Activated CD4-positive, alpha-beta memory T cell treated with anti-CD3 and anti-CD28 coated beads for 36 hours (primary cell): ENCODE measurements at regions of chr5 and their contacts with region 1.

Region 1: DNA sequence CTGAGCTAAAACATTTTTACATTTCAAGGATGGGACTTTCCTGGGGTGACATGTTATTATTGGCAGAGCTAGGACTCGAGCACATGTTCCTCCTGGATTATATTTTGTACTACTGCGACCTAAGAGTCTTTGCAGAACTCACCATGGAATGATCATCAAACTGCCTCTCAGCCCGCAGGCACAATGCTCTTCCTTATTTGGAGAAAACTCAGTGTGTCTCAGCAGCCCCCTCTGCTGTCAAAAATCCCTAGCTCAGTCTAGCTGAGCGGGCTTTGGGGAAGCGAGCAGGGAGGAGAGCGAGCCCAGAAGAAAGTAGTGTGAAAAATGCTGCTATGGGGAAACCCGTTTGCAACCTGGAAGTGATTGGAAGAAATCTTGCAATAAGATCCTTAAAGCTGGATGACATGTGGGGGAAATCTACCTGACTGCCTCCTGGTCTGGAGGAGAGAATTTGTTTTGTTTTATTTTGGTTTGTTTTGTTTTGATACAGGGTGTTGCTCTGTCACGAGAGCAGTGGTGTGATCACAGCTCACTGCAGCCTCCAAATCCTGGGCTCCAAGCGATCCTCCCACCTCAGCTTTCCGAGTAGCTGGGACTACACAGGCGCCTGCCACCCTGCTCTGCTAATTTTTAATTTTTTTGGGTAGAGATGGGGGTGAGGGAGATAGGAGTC is 89.9 kb upstream of the CLINT1 start:
- DNase-seq: peak; percentile 85
- H3K4me3 Mint-ChIP-seq: no peak overlapping the region
- H3K27ac Mint-ChIP-seq: no peak overlapping the region
- H3K4me1 Mint-ChIP-seq: peaks cover 4% of the 10 kb centered on the region
- H3K27me3 Mint-ChIP-seq: peaks cover 6% of the 10 kb centered on the region

Region 2: DNA sequence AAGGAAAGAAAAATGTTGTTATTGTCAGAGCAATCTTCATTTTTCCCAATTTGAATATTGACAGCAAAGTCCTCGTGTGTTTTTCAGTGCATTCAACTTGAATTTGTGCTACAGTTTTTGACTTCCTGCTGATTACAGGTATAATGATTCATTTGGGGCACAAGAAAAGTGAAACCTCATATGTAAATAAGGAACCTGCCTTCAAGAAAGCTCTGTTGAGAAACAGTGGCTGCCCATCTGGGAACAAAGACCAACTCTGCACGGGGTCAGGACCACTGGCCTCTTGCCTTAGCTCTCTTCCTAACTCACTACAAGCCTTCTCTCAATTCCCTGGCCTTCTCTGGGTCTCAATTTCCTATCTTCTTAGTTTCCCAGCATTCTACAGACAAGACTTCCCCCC is 1006.8 kb before region 1 on chr5:
- CTCF ChIA-PET with region 1: no interaction called
- POLR2A ChIA-PET with region 1: no interaction called
- intact Hi-C with region 1: no loop called
- DNase-seq: no peak
- H3K4me3 Mint-ChIP-seq: no peak overlapping the region
- H3K27ac Mint-ChIP-seq: peak overlapping the region; percentile 52
- H3K4me1 Mint-ChIP-seq: peaks cover 16% of the 10 kb centered on the region
- H3K27me3 Mint-ChIP-seq: no peaks in the 10 kb centered on the region

Region 3: GRCh38 chr5:157761690-157762621 is 186.9 kb before region 1 on chr5:
- CTCF ChIA-PET with region 1: interaction called, 69 read pairs
- POLR2A ChIA-PET with region 1: no interaction called
- intact Hi-C with region 1: loop called (anchors 1 kb)
- DNase-seq: no peak
- H3K4me3 Mint-ChIP-seq: no peak overlapping the region
- H3K27ac Mint-ChIP-seq: no peak overlapping the region
- H3K4me1 Mint-ChIP-seq: peaks cover 15% of the 10 kb centered on the region
- H3K27me3 Mint-ChIP-seq: no peaks in the 10 kb centered on the region

Region 4: DNA sequence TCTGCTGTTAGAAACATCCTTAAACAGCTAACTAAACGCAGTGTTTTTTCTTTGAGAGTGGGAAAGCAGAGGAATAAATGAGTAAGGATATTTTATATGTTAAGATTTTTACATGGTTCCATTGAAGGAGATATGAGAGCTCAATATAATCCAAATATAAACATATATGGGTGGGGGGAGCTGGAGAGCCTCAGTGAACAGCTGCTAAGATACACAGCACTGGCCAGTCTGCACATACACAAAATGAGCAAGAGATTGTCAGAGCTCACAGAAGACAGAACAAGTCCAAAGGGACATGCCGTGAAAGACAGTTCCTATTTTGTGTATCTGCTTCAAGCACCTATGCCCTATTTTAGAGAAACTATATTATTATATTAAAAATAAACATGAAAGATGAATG is 136.8 kb before region 1 on chr5:
- CTCF ChIA-PET with region 1: interaction called, 95 read pairs
- POLR2A ChIA-PET with region 1: no interaction called
- intact Hi-C with region 1: loop called (anchors 1 kb)
- DNase-seq: no peak
- H3K4me3 Mint-ChIP-seq: no peak overlapping the region
- H3K27ac Mint-ChIP-seq: no peak overlapping the region
- H3K4me1 Mint-ChIP-seq: no peaks in the 10 kb centered on the region
- H3K27me3 Mint-ChIP-seq: no peaks in the 10 kb centered on the region

Region 5: DNA sequence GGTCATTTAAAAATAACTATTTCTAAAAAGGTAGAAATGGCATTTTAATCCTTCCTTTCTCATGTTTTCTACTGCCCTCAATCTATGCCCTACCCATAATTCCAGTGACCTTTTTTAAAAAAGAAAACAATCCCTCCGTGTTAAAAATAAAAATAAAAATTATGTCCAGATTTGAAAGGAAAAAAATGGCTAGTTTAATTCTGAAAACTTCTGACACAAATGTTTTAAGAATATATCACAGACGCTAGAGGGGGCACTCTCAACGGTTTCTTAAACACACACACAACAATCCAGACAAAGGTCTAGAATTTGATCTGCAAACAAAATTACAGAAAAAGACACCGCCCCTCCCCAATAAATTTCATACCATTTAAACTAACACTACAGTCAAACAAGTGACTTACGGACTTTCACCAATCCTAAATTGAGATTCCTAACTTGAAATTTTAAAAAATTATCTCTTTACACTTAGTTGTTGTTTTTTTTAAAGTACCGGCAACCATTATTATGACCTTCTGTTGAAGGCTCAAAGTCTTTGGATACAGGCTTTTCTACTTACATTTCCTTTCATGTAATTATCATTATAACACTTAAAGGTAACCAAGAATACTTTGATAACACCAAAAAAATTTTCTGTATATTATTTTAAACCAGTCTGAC is 128.2 kb before region 1 on chr5:
- CTCF ChIA-PET with region 1: interaction called, 95 read pairs
- POLR2A ChIA-PET with region 1: no interaction called
- intact Hi-C with region 1: loop called (anchors 1 kb)
- DNase-seq: no peak
- H3K4me3 Mint-ChIP-seq: no peak overlapping the region
- H3K27ac Mint-ChIP-seq: no peak overlapping the region
- H3K4me1 Mint-ChIP-seq: peaks cover 25% of the 10 kb centered on the region
- H3K27me3 Mint-ChIP-seq: no peaks in the 10 kb centered on the region

Region 6: GRCh38 chr5:157917899-157918809 is 30.7 kb before region 1 on chr5:
- CTCF ChIA-PET with region 1: interaction called, 10 read pairs
- POLR2A ChIA-PET with region 1: no interaction called
- intact Hi-C with region 1: no loop called
- DNase-seq: peak; percentile 83
- H3K4me3 Mint-ChIP-seq: no peak overlapping the region
- H3K27ac Mint-ChIP-seq: no peak overlapping the region
- H3K4me1 Mint-ChIP-seq: peaks cover 22% of the 10 kb centered on the region
- H3K27me3 Mint-ChIP-seq: no peaks in the 10 kb centered on the region

Region 7: GRCh38 chr5:157994906-157995519 is 46.1 kb after region 1 on chr5:
- CTCF ChIA-PET with region 1: interaction called, 14 read pairs
- POLR2A ChIA-PET with region 1: no interaction called
- intact Hi-C with region 1: loop called (anchors 2 kb)
- DNase-seq: peak; percentile 66
- H3K4me3 Mint-ChIP-seq: no peak overlapping the region
- H3K27ac Mint-ChIP-seq: no peak overlapping the region
- H3K4me1 Mint-ChIP-seq: peaks cover 13% of the 10 kb centered on the region
- H3K27me3 Mint-ChIP-seq: peaks cover 30% of the 10 kb centered on the region